Activated CD4-positive, alpha-beta T cell treated with anti-CD3 and anti-CD28 coated beads for 36 hours (primary cell): ENCODE measurements at regions of chr10 and their contacts with region 1.

Region 1: GRCh38 chr10:87771871-87772500 is 46.0 kb downstream of the ATAD1 start:
- DNase-seq: no peak
- ATAC-seq: peak; percentile 55
- H3K4me3 Mint-ChIP-seq: no peak overlapping the region
- H3K27ac Mint-ChIP-seq: no peak overlapping the region
- H3K4me1 Mint-ChIP-seq: peaks cover 9% of the 10 kb centered on the region
- H3K27me3 Mint-ChIP-seq: no peaks in the 10 kb centered on the region

Region 2: DNA sequence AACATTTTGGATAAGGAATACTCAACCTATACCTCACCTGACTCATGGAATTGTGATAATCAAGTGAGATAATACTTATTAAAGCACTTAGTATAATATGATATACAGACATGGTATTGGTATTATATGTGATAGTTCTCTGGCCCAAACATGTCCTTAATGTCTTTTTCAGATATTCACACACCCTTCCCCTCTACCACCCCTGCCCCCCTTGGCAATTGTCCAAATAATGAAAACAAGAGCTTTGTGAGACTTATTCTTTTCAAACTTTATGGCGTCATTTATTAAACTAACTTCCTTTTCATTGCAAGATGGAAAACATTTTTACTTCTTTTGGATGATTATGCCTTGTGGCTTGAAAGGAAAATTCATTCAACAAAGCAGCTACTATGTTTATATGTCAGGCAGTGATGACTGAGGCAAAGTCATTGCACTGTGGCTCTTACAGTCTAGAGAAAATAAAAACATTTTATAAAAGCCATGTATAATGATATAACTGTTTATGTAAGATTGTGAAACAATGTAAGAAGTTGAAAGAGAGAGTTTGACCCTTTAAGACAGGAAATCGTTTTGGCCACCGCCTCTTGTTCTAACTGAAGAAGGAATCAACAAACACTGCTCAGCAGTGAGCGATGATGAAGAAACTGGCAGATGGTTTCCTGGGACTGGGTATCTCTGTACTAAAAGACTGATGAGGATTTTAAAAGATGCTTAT is 239.9 kb before region 1 on chr10:
- CTCF ChIA-PET with region 1: interaction called, 13 read pairs
- POLR2A ChIA-PET with region 1: no interaction called
- intact Hi-C with region 1: loop called (anchors 1 to 2 kb)
- DNase-seq: no peak
- ATAC-seq: no peak
- H3K4me3 Mint-ChIP-seq: no peak overlapping the region
- H3K27ac Mint-ChIP-seq: no peak overlapping the region
- H3K4me1 Mint-ChIP-seq: peaks cover 12% of the 10 kb centered on the region
- H3K27me3 Mint-ChIP-seq: no peaks in the 10 kb centered on the region

Region 3: DNA sequence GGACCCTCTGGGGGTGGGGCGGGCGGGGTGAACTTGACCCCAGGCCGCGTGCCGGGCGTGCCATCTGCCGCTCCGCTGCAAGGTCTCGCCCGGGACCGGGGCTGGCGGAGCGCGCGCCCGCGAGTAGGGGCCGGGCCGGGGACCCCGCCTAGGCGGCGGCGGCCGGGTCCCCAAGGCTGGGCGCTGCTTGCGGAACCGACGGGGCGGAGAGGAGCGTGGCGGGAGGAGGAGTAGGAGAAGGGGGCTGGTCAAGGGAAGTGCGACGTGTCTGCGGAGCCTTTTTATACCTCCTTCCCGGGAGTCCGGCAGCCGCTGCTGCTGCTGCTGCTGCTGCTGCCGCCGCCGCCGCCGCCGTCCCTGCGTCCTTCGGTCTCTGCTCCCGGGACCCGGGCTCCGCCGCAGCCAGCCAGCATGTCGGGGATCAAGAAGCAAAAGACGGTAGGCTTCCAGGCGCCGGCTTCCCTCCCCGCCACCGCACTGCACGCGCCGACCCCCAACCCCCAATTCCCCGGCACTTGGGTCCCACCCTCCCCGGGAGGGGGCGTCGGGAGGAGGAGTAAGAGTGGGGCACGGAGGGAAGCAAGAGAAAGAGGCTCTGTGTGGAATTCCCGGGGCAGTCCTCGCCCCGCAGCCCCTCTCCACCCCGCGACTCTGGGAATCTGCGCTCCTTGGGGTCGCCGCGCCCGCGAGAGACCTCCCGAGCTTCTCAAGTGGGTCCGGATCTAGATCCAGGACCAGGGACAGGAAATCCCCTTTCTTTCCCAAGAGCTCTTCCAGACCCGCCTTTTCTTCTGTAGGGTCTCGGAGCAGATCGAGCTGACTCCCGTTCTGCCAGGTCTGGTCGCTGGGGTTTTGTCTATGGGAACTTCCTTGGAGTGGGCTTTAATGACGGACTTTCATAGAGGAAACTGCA is 112.2 kb before region 1 on chr10 and contains the start of gene PAPSS2:
- CTCF ChIA-PET with region 1: interaction called, 13 read pairs
- POLR2A ChIA-PET with region 1: no interaction called
- intact Hi-C with region 1: loop called (anchors 1 kb)
- DNase-seq: peak; percentile 56
- ATAC-seq: peak; percentile 24
- H3K4me3 Mint-ChIP-seq: peak within 1 kb of the TSS; percentile 65
- H3K27ac Mint-ChIP-seq: no peak within 1 kb of the TSS
- H3K4me1 Mint-ChIP-seq: peaks cover 8% of the 10 kb centered on the region
- H3K27me3 Mint-ChIP-seq: peaks cover 38% of the 10 kb centered on the region
- total RNA-seq, gene PAPSS2: 0.05 to 0.30 TPM

Region 4: GRCh38 chr10:87786421-87786820 is 14.4 kb after region 1 on chr10:
- CTCF ChIA-PET with region 1: interaction called, 13 read pairs
- POLR2A ChIA-PET with region 1: interaction called, 3 read pairs
- intact Hi-C with region 1: no loop called
- DNase-seq: no peak
- ATAC-seq: no peak
- H3K4me3 Mint-ChIP-seq: no peak overlapping the region
- H3K27ac Mint-ChIP-seq: no peak overlapping the region
- H3K4me1 Mint-ChIP-seq: peaks cover 2% of the 10 kb centered on the region
- H3K27me3 Mint-ChIP-seq: no peaks in the 10 kb centered on the region

Region 5: GRCh38 chr10:88004451-88004850 is 232.5 kb after region 1 on chr10:
- CTCF ChIA-PET with region 1: no interaction called
- POLR2A ChIA-PET with region 1: no interaction called
- intact Hi-C with region 1: no loop called
- DNase-seq: no peak
- ATAC-seq: no peak
- H3K4me3 Mint-ChIP-seq: no peak overlapping the region
- H3K27ac Mint-ChIP-seq: no peak overlapping the region
- H3K4me1 Mint-ChIP-seq: no peaks in the 10 kb centered on the region
- H3K27me3 Mint-ChIP-seq: no peaks in the 10 kb centered on the region